ENCODE measurements at regions of chr4 and their contacts with region 1.

Region 1: DNA sequence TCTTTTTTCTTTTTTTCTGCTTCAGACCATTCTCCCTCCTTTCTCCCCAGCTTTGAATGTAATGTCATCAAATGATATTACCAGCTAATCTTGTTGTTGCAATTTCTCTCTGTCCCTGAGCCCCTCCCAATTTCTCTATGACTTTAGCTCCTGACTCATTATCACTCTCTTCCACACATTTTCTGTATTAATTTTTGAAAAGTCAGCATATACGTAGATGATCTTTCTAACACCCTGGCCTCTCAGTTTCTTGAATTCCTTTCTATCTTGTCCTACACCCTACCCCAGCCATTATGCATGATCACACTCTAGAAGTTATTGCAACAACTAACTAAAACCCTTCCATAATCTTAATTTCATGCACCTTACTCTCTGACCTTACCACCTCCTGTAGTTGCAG is 13.1 kb upstream of the TRPC3 start:
- DNase-seq: no peak
- H3K4me3 Mint-ChIP-seq: no peak overlapping the region
- H3K27ac Mint-ChIP-seq: no peak overlapping the region
- H3K4me1 Mint-ChIP-seq: no peaks in the 10 kb centered on the region
- H3K27me3 Mint-ChIP-seq: peaks cover under 1% of the 10 kb centered on the region
- CTCF ChIP-seq: no peak

Region 2: DNA sequence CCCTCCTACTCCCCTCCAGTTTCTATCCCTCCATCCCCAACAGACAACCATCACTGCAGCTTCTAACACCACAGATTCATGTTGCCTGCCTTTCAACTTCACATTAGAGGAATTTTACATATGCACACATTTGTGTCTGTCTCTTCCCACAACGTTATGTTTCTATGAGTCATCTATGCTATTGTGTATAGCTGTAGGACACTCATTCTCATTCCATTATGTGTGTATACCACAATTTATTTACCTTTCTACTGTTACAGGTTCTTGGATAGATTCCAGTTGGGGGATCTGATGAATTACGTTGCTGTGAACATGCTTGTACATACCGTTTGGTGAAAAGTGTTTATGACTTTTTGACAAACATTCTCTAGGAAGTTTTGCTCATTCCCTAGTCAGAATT is 45.7 kb after region 1 on chr4:
- CTCF ChIA-PET with region 1: no interaction called
- POLR2A ChIA-PET with region 1: no interaction called
- intact Hi-C with region 1: loop called (anchors 5 kb)
- DNase-seq: peak; percentile 81
- H3K4me3 Mint-ChIP-seq: no peak overlapping the region
- H3K27ac Mint-ChIP-seq: no peak overlapping the region
- H3K4me1 Mint-ChIP-seq: peaks cover 14% of the 10 kb centered on the region
- H3K27me3 Mint-ChIP-seq: no peaks in the 10 kb centered on the region
- CTCF ChIP-seq: no peak